ENCODE measurements at regions of chr16 and their contacts with region 1.

Region 1: DNA sequence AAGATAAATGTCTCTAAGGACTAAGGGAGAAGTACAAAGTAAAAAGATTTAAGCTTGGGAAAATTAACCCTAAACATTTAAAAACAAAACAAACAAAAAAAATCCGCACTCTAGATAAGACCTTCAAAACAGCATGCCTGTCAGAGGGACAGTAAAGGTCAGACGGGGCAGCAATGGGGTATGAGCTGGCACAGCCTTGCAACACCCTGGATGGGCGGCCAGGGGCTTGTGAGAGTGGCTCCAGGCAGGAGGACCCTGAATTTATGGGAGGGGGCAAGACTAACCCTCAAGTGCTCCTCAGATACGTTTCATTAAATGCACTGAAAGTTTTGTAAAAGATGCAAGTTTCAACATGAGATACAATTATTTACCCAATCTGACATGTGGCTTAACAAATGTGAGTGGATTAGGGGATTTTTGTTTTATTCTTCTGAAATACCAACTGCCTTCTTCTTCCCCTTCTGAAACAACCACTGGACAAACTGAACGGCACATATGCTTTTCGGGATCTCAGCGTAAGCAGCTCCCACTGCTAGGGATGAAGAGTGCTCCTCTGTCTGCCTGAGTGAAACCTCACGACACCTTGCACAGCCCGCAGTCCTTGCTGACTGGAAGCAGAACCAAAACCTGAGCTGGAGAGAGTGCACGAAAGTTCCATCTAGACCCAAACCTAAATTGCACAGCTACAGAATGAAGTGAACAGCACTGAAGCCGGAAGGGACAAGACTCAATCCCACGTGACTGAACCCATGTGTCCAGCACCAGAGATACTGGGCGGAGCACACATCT is 128.4 kb downstream of the ANKRD11 start:
- DNase-seq: no peak
- H3K4me3 Mint-ChIP-seq: peak overlapping the region; percentile 62
- H3K27ac Mint-ChIP-seq: peak overlapping the region; percentile 86
- H3K4me1 Mint-ChIP-seq: peaks cover 88% of the 10 kb centered on the region
- H3K27me3 Mint-ChIP-seq: no peaks in the 10 kb centered on the region

Region 2: GRCh38 chr16:89325861-89326471 is 36.0 kb before region 1 on chr16:
- intact Hi-C with region 1: loop called (anchors 2 kb)
- DNase-seq: no peak
- H3K4me3 Mint-ChIP-seq: peak overlapping the region; percentile 13
- H3K27ac Mint-ChIP-seq: peak overlapping the region; percentile 67
- H3K4me1 Mint-ChIP-seq: peaks cover 73% of the 10 kb centered on the region
- H3K27me3 Mint-ChIP-seq: no peaks in the 10 kb centered on the region

Region 3: DNA sequence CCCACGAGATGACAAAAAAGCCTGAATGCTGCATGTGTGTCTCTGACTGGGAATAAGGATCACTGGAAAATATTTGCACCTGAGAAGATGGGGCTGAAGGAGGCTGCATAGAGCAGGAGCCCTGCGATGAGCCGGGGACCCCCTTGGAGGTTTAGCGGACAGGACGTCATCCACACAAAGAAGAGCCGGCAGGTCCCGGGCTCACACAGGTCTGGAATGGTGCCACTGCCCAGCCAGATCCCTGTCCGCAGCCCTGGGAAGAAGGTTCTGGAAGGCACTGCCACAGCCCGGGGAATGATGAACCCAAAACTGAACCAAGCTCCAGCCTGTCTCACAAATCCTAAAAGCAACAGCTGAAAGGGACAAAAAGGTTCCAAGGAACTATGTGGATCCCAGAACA is 26.6 kb after region 1 on chr16:
- intact Hi-C with region 1: loop called (anchors 2 kb)
- DNase-seq: no peak
- H3K4me3 Mint-ChIP-seq: no peak overlapping the region
- H3K27ac Mint-ChIP-seq: peak overlapping the region; percentile 59
- H3K4me1 Mint-ChIP-seq: peaks cover 47% of the 10 kb centered on the region
- H3K27me3 Mint-ChIP-seq: no peaks in the 10 kb centered on the region